ENCODE measurements at regions of chr5 and their contacts with region 1.

Region 1: DNA sequence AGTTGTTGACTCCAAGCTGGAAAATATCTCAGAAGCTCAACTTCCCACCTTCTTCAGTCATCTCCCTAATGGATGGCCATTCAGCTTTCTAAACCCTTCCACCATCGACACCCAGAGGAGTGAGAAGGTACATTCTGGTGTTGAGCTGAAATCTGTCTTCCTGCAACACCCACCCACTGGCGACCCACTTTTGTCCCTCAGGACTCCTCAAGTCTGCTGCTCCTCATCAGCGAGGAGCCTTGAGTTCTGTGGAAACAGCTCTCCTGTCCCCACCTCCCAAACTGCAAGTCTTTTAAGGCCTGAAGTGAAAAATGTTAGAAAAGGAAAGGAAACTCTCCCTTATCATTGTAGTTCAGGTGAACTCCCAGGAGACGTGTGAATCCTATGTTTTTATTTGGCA is 111.5 kb upstream of the HAND1 start:
- DNase-seq: no peak
- ATAC-seq: no peak
- H3K4me3 Mint-ChIP-seq: no peak overlapping the region
- H3K27ac Mint-ChIP-seq: no peak overlapping the region
- H3K4me1 Mint-ChIP-seq: no peaks in the 10 kb centered on the region
- H3K27me3 Mint-ChIP-seq: peaks cover 9% of the 10 kb centered on the region
- CTCF ChIP-seq: no peak

Region 2: GRCh38 chr5:154513669-154514084 is 75.8 kb before region 1 on chr5:
- CTCF ChIA-PET with region 1: no interaction called
- POLR2A ChIA-PET with region 1: no interaction called
- intact Hi-C with region 1: no loop called
- DNase-seq: no peak
- ATAC-seq: no peak
- H3K4me3 Mint-ChIP-seq: no peak overlapping the region
- H3K27ac Mint-ChIP-seq: no peak overlapping the region
- H3K4me1 Mint-ChIP-seq: no peaks in the 10 kb centered on the region
- H3K27me3 Mint-ChIP-seq: peaks cover 30% of the 10 kb centered on the region
- CTCF ChIP-seq: no peak

Region 3: GRCh38 chr5:154547551-154547950 is 42.0 kb before region 1 on chr5:
- CTCF ChIA-PET with region 1: no interaction called
- POLR2A ChIA-PET with region 1: interaction called, 19 read pairs
- intact Hi-C with region 1: no loop called
- DNase-seq: no peak
- ATAC-seq: no peak
- H3K4me3 Mint-ChIP-seq: no peak overlapping the region
- H3K27ac Mint-ChIP-seq: no peak overlapping the region
- H3K4me1 Mint-ChIP-seq: no peaks in the 10 kb centered on the region
- H3K27me3 Mint-ChIP-seq: peaks cover 16% of the 10 kb centered on the region
- CTCF ChIP-seq: no peak

Region 4: GRCh38 chr5:155189981-155190380 is 600.5 kb after region 1 on chr5:
- CTCF ChIA-PET with region 1: no interaction called
- POLR2A ChIA-PET with region 1: no interaction called
- intact Hi-C with region 1: no loop called
- DNase-seq: no peak
- ATAC-seq: no peak
- H3K4me3 Mint-ChIP-seq: no peak overlapping the region
- H3K27ac Mint-ChIP-seq: no peak overlapping the region
- H3K4me1 Mint-ChIP-seq: no peaks in the 10 kb centered on the region
- H3K27me3 Mint-ChIP-seq: no peaks in the 10 kb centered on the region
- CTCF ChIP-seq: no peak

Region 5: DNA sequence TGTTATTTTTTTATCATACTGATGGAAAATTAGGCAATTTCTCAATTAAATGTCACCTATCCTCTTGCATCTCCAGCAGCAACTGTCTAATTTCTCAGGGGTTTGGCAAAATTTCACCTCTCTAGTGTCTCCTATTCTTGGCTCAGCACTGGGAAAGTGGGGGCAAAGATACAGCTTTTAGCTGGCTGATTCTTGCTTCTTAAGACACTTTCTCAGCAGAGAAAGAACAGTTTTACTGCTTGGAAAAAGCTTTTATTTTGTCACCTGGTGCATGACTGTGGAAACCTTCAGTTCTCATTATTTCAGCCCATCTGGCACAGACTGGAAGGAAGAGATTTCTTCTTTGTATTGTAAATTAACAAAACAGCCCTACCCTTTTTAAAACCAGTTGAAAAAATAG is 1453.8 kb after region 1 on chr5:
- CTCF ChIA-PET with region 1: no interaction called
- POLR2A ChIA-PET with region 1: no interaction called
- intact Hi-C with region 1: no loop called
- DNase-seq: no peak
- ATAC-seq: no peak
- H3K4me3 Mint-ChIP-seq: no peak overlapping the region
- H3K27ac Mint-ChIP-seq: no peak overlapping the region
- H3K4me1 Mint-ChIP-seq: no peaks in the 10 kb centered on the region
- H3K27me3 Mint-ChIP-seq: peaks cover 2% of the 10 kb centered on the region
- CTCF ChIP-seq: no peak

Measured in activated B cell treated with CpG ODN at 0.5 μM for 24 hours (primary cell).